PC-9 (cell line): ENCODE measurements at regions of chr2 and their contacts with region 1.

Region 1: GRCh38 chr2:105337124-105338019 is at the start of gene C2orf49:
- DNase-seq: peak; percentile 63 to 77
- H3K4me3 ChIP-seq: peak within 1 kb of the TSS; percentile 100
- H3K27ac ChIP-seq: peak within 1 kb of the TSS; percentile 98
- H3K4me1 ChIP-seq: peaks cover 20% of the 10 kb centered on the region
- H3K27me3 ChIP-seq: no peaks in the 10 kb centered on the region
- CTCF ChIP-seq: no peak
- total RNA-seq, gene C2orf49: 16.2 and 19.8 TPM in 2 replicates

Region 2: DNA sequence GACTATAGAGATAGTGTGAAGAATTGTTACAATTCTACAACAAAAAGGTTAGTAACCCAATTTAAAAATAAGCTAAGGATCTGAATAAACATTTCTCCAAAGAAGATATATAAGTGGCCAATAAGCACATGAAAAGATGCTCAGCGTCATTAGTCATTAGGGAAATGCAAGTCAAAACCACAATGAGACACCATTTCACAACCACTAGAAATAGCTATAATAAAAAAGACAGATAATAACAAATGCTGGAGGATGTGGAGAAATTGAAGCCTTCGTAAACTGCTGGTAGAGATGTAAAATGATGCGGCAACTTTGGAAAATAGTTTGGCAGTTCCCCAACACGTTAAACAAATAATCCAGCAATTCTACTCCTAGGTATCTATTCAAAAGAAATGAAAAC is 850.0 kb before region 1 on chr2:
- CTCF ChIA-PET with region 1: no interaction called
- POLR2A ChIA-PET with region 1: no interaction called
- intact Hi-C with region 1: no loop called
- DNase-seq: no peak
- H3K4me3 ChIP-seq: no peak overlapping the region
- H3K27ac ChIP-seq: no peak overlapping the region
- H3K4me1 ChIP-seq: no peaks in the 10 kb centered on the region
- H3K27me3 ChIP-seq: peaks cover 18% of the 10 kb centered on the region; the same call in 1 of the 2 replicates
- CTCF ChIP-seq: no peak

Region 3: DNA sequence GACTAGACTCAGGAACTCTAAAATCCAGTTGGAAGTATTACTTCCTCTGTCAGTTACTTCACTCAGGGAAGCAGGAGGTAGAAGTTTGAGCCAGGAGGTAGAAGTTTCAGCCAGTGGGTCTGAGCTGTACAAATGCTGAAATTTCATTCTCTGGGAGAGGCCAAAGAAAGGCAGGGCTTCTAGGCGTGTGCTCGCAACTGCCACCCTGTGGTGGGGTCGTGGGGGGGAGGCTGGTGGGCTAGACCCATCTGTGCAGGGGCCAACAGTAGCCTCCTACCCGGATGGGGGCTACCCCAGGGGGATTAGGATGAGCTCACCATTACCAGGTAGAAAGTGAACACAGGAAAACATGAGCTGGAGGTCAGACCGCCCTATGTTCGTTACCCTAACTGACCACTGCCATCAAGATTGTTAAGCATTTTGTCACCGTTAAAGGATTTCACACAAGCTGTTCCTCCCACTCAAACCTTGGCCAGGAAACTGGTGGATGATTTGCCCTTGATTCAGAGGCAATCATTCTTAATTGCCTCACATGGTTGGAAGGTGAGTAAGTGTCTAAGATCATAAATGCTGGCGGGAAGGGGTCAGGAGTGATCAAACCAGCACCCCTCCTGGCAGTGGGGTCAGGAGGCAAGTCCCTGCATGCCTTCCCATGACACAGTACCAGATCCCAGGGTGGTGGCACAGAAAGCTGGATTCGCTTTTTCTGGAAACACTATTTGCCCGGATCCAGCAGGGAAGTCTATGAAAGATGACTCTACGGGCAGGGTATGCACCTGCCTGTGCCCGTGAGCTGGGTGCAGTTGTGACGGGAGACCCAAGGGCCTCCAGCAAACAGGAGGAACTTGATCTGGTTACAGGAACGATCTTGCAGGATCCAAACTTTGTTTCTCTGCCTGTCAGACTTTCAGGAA is 66.7 kb after region 1 on chr2:
- CTCF ChIA-PET with region 1: no interaction called
- POLR2A ChIA-PET with region 1: interaction called, 10 read pairs
- intact Hi-C with region 1: no loop called
- DNase-seq: peak; percentile 82 to 98
- H3K4me3 ChIP-seq: peak overlapping the region; percentile 41; the same call in 1 of the 2 replicates
- H3K27ac ChIP-seq: peak overlapping the region; percentile 96
- H3K4me1 ChIP-seq: peaks cover 77% of the 10 kb centered on the region
- H3K27me3 ChIP-seq: no peaks in the 10 kb centered on the region
- CTCF ChIP-seq: peak; percentile 64

Region 4: DNA sequence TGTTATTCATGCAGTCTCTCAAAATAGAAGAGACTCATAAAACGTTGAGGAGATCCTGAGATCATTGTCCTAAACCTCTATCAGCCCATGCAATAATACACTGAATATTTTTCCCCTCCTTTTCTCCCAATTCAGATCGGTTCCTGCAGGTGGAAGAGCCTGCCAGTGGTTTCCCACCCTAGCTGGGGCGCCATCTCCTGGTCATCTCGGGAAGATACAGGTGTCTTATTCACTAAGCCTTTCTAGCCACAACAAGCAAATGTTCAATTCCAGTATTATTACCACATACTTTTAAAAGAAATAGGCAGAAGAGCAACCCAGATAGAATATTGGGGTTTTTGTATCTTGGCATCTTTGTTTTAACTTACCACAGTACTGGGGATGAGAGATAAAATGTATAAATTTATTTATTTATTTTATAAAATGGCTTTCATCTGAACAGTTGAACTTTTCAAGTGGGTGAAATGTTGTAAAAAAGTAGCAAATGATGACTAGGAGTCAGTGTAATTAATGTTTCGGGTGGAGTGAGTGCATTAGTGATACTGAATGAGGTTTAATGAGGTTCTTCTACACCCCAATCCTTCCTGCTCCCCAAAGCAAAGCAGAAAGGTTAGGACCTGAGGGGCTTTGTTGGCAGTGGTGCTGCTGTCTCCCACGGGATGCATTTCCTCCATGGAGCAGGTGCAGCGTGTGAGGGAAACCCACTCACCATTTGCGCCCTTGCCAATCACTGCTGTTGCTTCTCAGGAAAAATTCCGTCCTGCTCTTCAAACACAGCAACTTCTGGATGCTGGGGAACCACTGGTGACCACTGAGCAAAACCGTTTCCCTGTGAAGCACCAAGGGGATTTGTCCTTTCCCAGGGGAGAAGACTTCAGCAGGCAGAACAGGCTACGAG is 208.6 kb after region 1 on chr2:
- CTCF ChIA-PET with region 1: no interaction called
- POLR2A ChIA-PET with region 1: interaction called, 13 read pairs
- intact Hi-C with region 1: no loop called
- DNase-seq: peak; percentile 46 to 63
- H3K4me3 ChIP-seq: no peak overlapping the region
- H3K27ac ChIP-seq: no peak overlapping the region
- H3K4me1 ChIP-seq: peaks cover 22% of the 10 kb centered on the region
- H3K27me3 ChIP-seq: no peaks in the 10 kb centered on the region
- CTCF ChIP-seq: peak; percentile 88

Region 5: DNA sequence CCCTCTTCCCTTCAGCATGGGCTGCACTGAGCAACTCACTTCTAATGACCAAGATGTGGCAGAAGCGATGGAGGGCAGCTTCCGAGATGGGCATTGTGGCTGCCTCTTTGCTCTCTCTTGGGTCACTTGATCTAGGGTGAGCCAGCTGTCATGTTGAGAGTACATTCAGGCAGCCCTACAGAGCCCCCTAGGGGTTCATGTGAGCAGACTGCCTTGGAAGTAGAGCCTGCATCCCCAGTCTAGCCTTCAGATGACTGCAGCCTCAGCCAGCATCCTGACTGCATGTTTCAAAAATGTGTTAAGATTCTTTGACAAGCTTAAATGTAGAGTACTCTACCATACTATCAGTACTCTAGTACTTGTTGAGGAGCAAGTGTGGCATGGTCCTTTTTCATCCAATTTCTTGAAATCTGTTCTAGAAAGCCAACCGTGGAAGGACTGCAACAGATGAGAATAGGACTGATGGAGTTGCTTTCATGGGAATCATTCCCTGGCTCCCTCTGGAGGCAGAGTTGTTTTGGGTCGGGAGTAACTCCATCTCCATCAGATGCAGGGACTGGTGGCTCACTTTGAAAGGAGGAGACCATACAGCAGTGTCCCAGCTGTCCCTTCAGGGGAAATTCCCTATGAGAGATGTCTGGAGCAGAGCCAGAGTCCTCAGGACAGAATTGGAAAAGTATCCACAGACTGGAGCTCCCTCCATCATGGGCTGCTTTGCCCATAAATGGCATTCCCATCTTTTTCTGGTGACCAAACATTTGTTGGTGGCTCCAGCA is 551.4 kb after region 1 on chr2:
- CTCF ChIA-PET with region 1: no interaction called
- POLR2A ChIA-PET with region 1: no interaction called
- intact Hi-C with region 1: no loop called
- DNase-seq: no peak
- H3K4me3 ChIP-seq: no peak overlapping the region
- H3K27ac ChIP-seq: no peak overlapping the region
- H3K4me1 ChIP-seq: no peaks in the 10 kb centered on the region
- H3K27me3 ChIP-seq: no peaks in the 10 kb centered on the region
- CTCF ChIP-seq: peak; percentile 41; the same call in 1 of the 2 replicates